ENCODE measurements at regions of chr5 and their contacts with region 1.

Region 1: GRCh38 chr5:108681079-108681921 is 66.4 kb upstream of the FER start:
- DNase-seq: peak in 1 of 2 donors; percentile 8
- ATAC-seq: peak; percentile 89

Region 2: DNA sequence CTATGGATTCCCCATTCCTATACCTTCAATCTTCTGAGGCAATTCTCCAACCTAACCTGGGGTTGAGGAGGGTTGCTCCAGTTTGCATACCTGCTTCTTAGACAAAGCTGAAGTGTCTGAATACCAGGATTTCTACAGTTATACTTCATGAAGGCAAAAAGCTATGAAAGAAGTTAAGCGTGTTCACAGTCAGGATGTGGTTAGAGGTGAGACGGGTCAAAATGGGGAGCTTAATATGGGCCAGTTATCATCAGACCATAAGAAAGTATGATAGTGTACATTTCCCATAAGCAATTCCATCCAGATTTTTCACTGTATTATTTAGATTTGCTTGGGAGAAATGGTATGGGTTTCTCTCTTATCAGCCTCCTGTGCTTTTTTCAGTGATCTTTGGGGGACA is 90.5 kb before region 1 on chr5:
- intact Hi-C with region 1: no loop called
- DNase-seq: no peak
- ATAC-seq: no peak

Region 3: GRCh38 chr5:108634010-108634616 is 47.2 kb before region 1 on chr5:
- intact Hi-C with region 1: no loop called
- DNase-seq: no peak
- ATAC-seq: no peak

Region 4: DNA sequence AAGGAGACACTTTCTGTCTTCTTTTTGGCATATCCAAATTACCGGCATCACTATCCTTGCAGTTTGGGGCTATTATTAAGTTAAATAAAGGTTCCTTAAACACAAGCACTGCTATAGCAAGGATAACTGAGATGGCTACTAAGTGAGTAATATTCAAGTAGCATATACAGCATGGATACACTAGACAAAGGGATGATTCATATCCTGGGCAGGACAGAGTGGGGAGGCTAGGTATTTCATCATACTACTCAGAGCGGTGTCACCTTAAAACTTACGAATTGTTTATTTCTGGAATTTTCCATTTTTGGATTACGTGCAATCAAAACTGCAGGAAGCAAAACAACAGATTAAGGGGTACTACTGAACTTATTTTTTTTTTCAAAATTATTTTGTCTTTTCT is 120.5 kb after region 1 on chr5:
- intact Hi-C with region 1: no loop called
- DNase-seq: no peak
- ATAC-seq: no peak

Region 5: GRCh38 chr5:109479260-109479860 is 798.1 kb after region 1 on chr5:
- intact Hi-C with region 1: loop called in 1 of 2 experiments (anchors 5 kb)
- DNase-seq: no peak
- ATAC-seq: no peak